CD4-positive, alpha-beta memory T cell (primary cell): ENCODE measurements at regions of chr5 and their contacts with region 1.

Region 1: GRCh38 chr5:188488-189481 is 2.5 kb upstream of the LRRC14B start:
- DNase-seq: peak; percentile 80 to 83 (median 82)
- H3K4me3 ChIP-seq: no peak overlapping the region
- H3K4me3 Mint-ChIP-seq: peak overlapping the region in 4 of 8 donors; percentile 8 to 62 (median 44)
- H3K27ac ChIP-seq: no peak overlapping the region
- H3K27ac Mint-ChIP-seq: peak overlapping the region in 6 of 7 donors; percentile 12 to 66 (median 34)
- H3K4me1 ChIP-seq: peaks cover 10% of the 10 kb centered on the region
- H3K4me1 Mint-ChIP-seq: peaks cover 4 to 11% (median 7%) of the 10 kb centered on the region in 4 donors
- H3K27me3 ChIP-seq: peaks cover 6% of the 10 kb centered on the region
- H3K27me3 Mint-ChIP-seq: peaks cover 8 to 15% of the 10 kb centered on the region in 2 donors

Region 2: DNA sequence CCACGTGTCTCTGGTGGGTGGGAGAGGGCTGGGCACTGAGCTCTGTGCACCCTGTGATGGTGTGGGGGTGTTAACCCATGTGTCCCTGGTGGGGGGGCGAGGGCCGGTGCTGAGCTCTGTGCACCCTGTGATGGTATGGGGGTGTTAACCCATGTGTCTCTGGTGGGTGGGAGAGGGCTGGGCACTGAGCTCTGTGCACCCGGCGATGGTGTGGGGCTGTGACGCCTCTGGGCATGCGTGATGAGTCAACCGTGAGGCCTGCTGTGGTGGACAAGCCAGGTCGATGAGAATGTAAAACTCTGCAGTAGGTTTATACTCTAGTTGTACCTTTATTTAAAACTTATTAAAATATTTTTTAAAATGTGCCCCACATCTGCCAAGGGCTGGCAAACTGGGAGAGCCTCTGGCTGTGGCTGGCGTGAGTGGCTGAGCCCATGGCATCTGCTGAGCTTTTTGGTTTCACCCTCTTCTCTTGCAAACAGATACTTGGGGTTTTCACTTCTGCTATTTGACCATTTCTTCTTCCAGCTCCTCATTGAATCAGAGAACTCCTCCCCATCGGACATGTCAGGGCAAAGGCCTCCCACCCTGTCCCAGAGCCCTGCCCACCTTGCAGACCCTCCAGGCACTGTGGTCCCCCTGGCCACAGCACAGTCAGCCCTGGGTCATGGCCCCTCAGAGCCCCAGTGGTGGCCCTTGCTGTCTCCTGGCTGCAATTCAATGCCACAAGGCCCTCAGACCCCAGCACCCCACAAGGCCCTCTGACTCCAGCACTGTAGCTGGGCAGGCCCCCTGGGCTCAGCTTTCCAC is 235.7 kb after region 1 on chr5:
- CTCF ChIA-PET with region 1: interaction called, 19 read pairs
- POLR2A ChIA-PET with region 1: no interaction called
- intact Hi-C with region 1: loop called (anchors 1 kb)
- DNase-seq: no peak
- H3K4me3 ChIP-seq: no peak overlapping the region
- H3K4me3 Mint-ChIP-seq: no peak overlapping the region
- H3K27ac ChIP-seq: no peak overlapping the region
- H3K27ac Mint-ChIP-seq: no peak overlapping the region
- H3K4me1 ChIP-seq: no peaks in the 10 kb centered on the region
- H3K4me1 Mint-ChIP-seq: no peaks in the 10 kb centered on the region
- H3K27me3 ChIP-seq: no peaks in the 10 kb centered on the region
- H3K27me3 Mint-ChIP-seq: peaks cover 5 to 8% of the 10 kb centered on the region in 2 donors